OCI-LY7 (cell line): ENCODE measurements at regions of chr6 and their contacts with region 1.

Region 1: DNA sequence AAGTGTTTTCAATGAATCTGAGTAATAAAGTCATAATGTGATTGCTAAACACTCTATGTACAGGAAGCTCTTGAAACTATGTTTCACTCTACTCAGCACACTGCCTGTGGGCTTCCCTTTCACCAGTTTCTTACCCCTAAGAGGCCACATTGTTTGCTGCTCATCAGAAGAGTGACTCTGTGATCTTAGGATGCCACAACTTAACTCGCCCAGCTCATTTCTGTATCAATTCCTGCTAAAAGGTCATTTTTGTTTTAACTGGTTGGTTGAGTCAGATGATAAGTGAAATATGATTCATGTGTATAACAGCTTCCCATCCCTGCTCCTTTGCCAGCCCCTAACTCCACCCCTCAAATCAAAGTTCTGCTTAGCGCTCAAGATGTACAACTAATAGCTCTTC is 9.8 kb upstream of the NDUFAF4 start:
- DNase-seq: no peak
- H3K4me3 ChIP-seq: no peak overlapping the region
- H3K27ac ChIP-seq: no peak overlapping the region
- H3K4me1 ChIP-seq: no peaks in the 10 kb centered on the region
- CTCF ChIP-seq: no peak

Region 2: GRCh38 chr6:96923871-96924493 is 16.5 kb after region 1 on chr6:
- CTCF ChIA-PET with region 1: interaction called, 4 read pairs
- POLR2A ChIA-PET with region 1: interaction called, 53 read pairs
- intact Hi-C with region 1: no loop called
- DNase-seq: no peak
- H3K4me3 ChIP-seq: peak overlapping the region; percentile 93
- H3K27ac ChIP-seq: peak overlapping the region; percentile 58
- H3K4me1 ChIP-seq: peaks cover 20% of the 10 kb centered on the region
- CTCF ChIP-seq: no peak